ENCODE measurements at regions of chr10 and their contacts with region 1.

Region 1: DNA sequence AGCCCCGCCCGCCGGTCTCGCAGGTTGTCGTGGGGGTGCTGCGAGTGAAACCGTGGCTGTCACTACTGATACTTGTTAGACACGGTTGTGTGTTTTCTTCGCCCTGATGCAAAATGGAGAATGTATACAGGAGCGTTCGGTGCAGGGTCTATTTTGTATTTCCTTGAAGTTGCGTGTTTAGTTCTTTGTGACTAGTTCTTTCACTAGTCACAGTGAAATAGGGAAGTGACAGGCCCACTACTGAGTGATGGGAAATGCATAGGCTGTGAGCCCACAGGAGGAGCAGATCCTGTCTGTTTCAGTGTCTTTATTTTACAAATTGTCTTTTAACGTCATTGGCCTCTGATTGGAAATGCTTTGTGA is 675 bp downstream of the ABRAXAS2 start:
- DNase-seq: no peak
- H3K4me3 Mint-ChIP-seq: peak overlapping the region; percentile 90
- H3K27ac Mint-ChIP-seq: peak overlapping the region; percentile 79
- H3K4me1 Mint-ChIP-seq: peaks cover 14% of the 10 kb centered on the region
- H3K27me3 Mint-ChIP-seq: peaks cover 3% of the 10 kb centered on the region

Region 2: DNA sequence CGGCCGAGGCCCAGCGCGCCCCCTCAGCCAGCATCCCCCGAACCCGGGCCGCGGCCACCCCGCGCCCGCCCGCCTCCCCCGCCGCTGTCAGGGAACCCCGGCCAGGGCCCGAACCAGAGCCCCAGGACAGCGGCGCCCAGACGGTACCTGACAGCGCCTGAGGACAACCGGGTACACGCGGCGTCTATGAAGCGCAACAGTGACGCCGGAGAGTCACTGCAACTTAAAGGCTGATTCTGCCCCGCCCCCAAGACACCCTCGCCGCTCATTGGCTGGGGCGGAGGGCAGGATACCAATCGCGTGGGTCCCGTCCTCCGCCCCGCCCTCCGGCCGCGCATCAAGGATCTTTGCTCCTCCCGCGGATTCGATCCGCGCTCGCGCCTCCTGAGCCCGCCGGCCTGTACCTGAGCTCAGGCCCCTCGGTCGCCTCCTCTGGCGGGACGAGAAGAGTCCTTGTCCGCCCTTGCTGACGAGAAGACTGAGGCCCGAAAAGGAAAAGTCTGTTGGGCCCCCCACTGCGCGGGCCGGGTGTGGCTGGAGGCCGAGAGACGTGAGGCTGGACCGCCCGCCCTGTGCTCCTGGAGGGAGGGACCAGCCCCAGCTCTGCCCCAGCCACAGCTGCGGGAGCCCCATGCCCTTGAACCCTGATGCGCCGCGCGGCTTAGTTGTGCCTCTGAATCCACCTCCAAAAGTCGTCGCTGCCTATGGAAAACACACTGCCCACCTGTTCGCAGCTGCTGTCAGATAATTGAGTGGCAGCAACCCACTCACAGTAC is 383.4 kb before region 1 on chr10 and contains the start of gene OAT:
- intact Hi-C with region 1: loop called (anchors 5 kb)
- DNase-seq: peak; percentile 93
- H3K4me3 Mint-ChIP-seq: peak within 1 kb of the TSS; percentile 81
- H3K27ac Mint-ChIP-seq: no peak within 1 kb of the TSS
- H3K4me1 Mint-ChIP-seq: peaks cover 8% of the 10 kb centered on the region
- H3K27me3 Mint-ChIP-seq: peaks cover 10% of the 10 kb centered on the region
- total RNA-seq, gene OAT: 42.6 and 45.8 TPM in 2 replicates

Region 3: GRCh38 chr10:124641282-124642087 is 160.8 kb before region 1 on chr10:
- intact Hi-C with region 1: no loop called
- DNase-seq: no peak
- H3K4me3 Mint-ChIP-seq: peak overlapping the region; percentile 15
- H3K27ac Mint-ChIP-seq: peak overlapping the region; percentile 65
- H3K4me1 Mint-ChIP-seq: peaks cover 30% of the 10 kb centered on the region
- H3K27me3 Mint-ChIP-seq: no peaks in the 10 kb centered on the region

Region 4: GRCh38 chr10:124732931-124733570 is 69.2 kb before region 1 on chr10:
- intact Hi-C with region 1: no loop called
- DNase-seq: no peak
- H3K4me3 Mint-ChIP-seq: peak overlapping the region; percentile 34
- H3K27ac Mint-ChIP-seq: peak overlapping the region; percentile 77
- H3K4me1 Mint-ChIP-seq: peaks cover 57% of the 10 kb centered on the region
- H3K27me3 Mint-ChIP-seq: no peaks in the 10 kb centered on the region

Region 5: GRCh38 chr10:124763267-124763666 is 39.0 kb before region 1 on chr10:
- intact Hi-C with region 1: no loop called
- DNase-seq: no peak
- H3K4me3 Mint-ChIP-seq: no peak overlapping the region
- H3K27ac Mint-ChIP-seq: no peak overlapping the region
- H3K4me1 Mint-ChIP-seq: no peaks in the 10 kb centered on the region
- H3K27me3 Mint-ChIP-seq: no peaks in the 10 kb centered on the region

Region 6: DNA sequence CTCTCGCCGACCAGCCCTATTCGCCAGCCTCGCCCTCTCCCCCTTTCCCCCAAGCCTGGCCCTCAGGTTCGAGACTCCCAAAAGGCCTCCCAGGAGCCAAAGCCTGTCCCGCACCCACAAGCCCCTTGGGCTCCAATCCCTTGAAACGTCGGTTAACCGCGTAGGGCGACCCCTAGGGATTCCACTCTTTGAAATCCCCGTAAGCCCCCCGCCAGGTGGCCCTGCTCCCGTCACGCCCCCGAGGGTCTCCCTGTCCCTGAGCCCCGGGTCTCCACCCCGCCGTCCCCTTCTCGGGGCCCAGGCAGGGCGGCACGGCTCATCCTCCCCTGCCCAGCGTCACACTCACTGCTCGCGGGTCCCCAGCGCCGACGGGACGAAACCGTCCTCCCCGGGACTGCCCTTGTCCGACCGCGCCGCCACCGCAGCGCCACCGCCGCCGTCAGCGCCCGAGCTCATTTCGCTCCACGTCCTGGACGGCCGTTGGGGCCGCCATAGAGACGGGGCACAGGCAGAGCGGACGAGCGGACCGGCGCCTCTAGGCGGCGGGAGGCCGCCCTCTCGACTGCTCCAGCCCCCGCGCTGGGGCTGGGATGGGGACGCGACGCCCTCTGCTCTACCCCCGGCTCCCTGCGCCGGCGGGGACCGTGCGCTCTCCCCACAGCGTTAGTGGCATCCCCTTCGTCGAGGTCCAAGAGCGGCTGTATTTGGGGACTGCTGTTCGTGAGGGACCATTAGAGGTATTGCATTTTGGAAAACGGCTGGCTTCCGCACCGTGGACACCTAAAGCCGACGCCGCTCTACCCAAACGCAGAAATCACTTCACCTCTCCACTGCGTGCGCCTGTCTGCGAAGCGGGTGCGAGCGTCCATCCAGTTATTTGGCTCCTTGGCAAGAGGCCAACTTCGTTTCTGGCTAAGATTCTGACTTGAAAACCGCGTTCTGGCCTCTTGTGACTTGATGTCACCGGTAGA is 10.6 kb before region 1 on chr10 and contains the start of gene EEF1AKMT2:
- intact Hi-C with region 1: loop called (anchors 1 kb)
- DNase-seq: peak; percentile 77
- H3K4me3 Mint-ChIP-seq: peak within 1 kb of the TSS; percentile 97
- H3K27ac Mint-ChIP-seq: peak within 1 kb of the TSS; percentile 95
- H3K4me1 Mint-ChIP-seq: peaks cover 15% of the 10 kb centered on the region
- H3K27me3 Mint-ChIP-seq: peaks cover 7% of the 10 kb centered on the region
- total RNA-seq, gene EEF1AKMT2: 20.9 and 21.0 TPM in 2 replicates